ENCODE measurements at regions of chr10 and their contacts with region 1.

Region 1: DNA sequence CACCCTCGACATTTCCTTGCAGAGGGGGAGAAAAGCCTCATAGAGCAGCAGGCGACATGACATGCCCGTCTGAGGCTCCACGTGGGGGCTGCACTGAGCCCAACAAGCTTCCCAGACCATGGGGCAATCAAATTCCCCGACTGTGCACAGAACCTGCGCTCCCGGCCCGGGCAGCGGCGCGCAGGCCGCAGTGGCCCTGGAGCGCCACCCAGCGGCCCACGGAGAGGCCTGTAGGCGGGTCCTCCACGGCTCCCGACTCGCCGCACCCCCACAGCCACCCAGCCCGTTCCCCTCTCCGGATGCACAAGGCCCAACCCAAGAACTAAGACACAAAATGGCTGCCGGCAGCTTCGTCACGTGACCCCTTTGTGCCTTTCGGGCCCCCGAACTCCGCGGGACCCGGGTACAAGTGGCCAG is 816 bp downstream of the EPC1 start:
- DNase-seq: peak; percentile 93 to 98 (median 97)
- H3K4me3 ChIP-seq: peak overlapping the region; percentile 99
- H3K4me3 Mint-ChIP-seq: peak overlapping the region; percentile 95 to 98 (median 97)
- H3K27ac ChIP-seq: peak overlapping the region; percentile 100
- H3K27ac Mint-ChIP-seq: peak overlapping the region; percentile 99 to 100 (median 100)
- H3K4me1 ChIP-seq: peaks cover 62% of the 10 kb centered on the region
- H3K4me1 Mint-ChIP-seq: peaks cover 67 to 79% (median 77%) of the 10 kb centered on the region in 3 donors
- H3K27me3 ChIP-seq: no peaks in the 10 kb centered on the region
- H3K27me3 Mint-ChIP-seq: peaks cover 0 to 4% of the 10 kb centered on the region in 2 donors

Region 2: DNA sequence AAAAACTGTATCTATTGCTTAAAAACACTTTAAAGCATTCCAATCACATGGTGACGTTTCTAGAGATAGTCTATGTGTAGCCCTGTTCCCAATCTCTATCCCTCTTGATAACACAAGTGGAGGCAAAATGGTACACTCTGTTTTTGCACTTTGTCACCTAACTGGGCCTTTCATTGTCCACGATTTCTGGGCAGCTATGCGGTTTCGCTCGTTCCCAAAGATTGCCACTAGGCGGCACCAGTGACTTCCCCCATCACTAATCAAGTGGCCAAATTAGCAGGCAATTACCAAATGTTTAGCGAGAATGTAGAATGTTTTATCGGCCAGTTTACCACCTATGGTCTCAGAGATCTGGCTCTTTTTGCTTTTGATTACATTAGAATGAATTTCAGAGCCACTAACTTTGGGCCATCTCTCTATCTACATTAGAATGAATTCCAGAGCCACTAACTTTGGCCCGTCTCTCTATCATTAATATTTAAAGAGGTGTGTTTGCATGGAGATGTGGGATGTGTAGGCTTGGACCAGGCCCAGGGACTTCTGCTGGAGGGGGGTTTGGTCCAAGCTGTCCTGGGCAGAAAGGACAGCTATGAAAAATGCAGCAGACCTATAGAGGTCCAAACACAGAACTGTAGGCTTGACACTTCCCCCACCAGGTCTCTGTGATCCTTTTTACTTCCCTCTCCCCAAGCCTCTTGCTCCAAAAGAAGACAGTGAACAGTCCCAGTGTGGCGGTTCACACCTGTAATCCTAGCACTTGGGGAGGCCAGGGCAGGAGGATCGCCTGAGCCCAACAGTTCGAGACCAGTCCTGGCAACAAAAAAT is 89.3 kb before region 1 on chr10:
- CTCF ChIA-PET with region 1: interaction called, 15 read pairs
- POLR2A ChIA-PET with region 1: no interaction called
- DNase-seq: peak; percentile 41 to 77 (median 55)
- H3K4me3 ChIP-seq: no peak overlapping the region
- H3K4me3 Mint-ChIP-seq: peak overlapping the region in 1 of 7 donors; percentile 10
- H3K27ac ChIP-seq: no peak overlapping the region
- H3K27ac Mint-ChIP-seq: no peak overlapping the region
- H3K4me1 ChIP-seq: peaks cover 7% of the 10 kb centered on the region
- H3K4me1 Mint-ChIP-seq: peaks cover 7 to 8% (median 8%) of the 10 kb centered on the region in 3 donors
- H3K27me3 ChIP-seq: no peaks in the 10 kb centered on the region
- H3K27me3 Mint-ChIP-seq: no peaks in the 10 kb centered on the region

Region 3: GRCh38 chr10:32263300-32263699 is 82.8 kb before region 1 on chr10:
- CTCF ChIA-PET with region 1: interaction called, 15 read pairs
- POLR2A ChIA-PET with region 1: no interaction called
- DNase-seq: no peak
- H3K4me3 ChIP-seq: no peak overlapping the region
- H3K4me3 Mint-ChIP-seq: no peak overlapping the region
- H3K27ac ChIP-seq: no peak overlapping the region
- H3K27ac Mint-ChIP-seq: peak overlapping the region in 2 of 8 donors; percentile 13 to 31
- H3K4me1 ChIP-seq: no peaks in the 10 kb centered on the region
- H3K4me1 Mint-ChIP-seq: peaks cover 0 to 5% (median 2%) of the 10 kb centered on the region in 3 donors
- H3K27me3 ChIP-seq: no peaks in the 10 kb centered on the region
- H3K27me3 Mint-ChIP-seq: no peaks in the 10 kb centered on the region

Region 4: DNA sequence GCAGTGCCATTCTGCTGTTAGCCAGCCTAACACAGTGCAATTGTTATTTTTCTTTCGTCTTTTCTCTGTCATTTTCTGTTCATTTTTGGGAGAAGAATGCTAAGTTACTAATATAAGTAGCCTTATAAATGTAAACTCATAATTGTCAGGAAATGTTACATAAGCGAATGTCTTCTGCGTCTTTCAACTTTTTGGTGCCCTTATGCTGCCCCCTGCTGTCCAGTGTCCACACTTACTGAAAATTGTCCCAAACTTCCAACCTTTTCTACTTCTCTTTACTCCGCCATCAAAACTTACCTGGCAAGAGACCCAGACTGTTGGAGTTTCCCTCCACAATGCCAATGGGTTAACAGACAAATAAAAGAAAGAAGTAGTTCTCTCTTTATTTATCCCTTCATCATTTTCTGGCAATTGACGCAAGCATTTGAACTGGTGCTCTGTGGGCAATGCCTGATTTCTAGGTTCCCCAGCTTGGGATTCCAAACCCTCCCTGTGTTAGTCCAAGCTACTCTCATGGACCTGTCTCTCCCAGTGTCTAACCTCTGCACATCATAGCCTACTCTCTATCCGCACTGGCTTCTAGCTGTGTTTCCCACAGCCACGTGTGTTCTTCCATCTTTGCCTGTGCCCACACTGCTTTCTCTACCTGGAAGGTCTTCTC is 21.8 kb after region 1 on chr10:
- CTCF ChIA-PET with region 1: interaction called, 13 read pairs
- POLR2A ChIA-PET with region 1: interaction called, 3 read pairs
- DNase-seq: peak; percentile 65 to 81 (median 68)
- H3K4me3 ChIP-seq: no peak overlapping the region
- H3K4me3 Mint-ChIP-seq: peak overlapping the region; percentile 7 to 81 (median 46)
- H3K27ac ChIP-seq: no peak overlapping the region
- H3K27ac Mint-ChIP-seq: peak overlapping the region; percentile 23 to 89 (median 53)
- H3K4me1 ChIP-seq: peaks cover 27% of the 10 kb centered on the region
- H3K4me1 Mint-ChIP-seq: peaks cover 46 to 77% (median 58%) of the 10 kb centered on the region in 3 donors
- H3K27me3 ChIP-seq: no peaks in the 10 kb centered on the region
- H3K27me3 Mint-ChIP-seq: no peaks in the 10 kb centered on the region

Region 5: DNA sequence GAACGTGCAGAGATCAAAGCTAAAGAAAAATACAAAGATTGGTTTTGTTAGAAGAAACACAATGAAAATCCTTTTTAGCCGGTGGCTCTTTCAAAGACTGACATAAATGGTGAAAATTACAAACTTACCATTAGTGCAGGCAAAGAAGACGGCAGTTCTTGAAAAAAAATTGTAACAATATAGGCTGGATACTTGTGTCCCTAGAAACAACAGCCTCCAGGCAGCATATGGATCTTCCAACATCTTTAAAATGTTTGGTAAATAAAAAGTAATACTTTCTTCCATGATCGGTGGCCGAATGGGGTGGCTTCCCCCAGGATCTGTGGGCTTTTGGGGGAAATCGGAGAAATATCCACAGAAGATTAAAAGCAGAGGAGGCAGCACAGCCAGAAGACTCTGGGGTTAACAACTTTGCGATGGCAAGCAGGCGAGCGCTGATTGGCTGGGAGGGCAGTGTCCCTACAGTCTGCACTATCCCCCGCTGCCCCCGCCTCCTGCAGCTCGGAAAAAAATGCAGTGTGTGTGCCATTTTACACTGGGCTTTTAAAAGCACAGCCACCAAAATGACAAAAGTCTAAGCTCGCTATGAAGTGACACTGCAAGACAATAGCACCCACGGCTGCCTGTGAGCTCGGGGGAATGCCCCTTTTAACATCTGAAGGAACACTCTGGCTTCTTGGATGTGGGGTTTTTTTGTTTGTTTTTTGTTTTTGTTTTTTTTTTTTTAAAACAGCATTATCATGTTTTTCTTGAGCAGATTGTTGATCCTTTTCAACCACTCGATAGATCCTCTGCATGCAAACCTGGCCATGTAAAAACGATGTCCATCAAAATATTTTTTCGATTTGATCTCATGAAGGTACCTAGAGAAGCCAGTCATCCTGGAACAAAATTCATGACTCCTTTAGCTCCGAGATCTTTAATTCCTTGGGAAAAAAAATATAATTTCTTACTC is 32.5 kb after region 1 on chr10:
- CTCF ChIA-PET with region 1: interaction called, 13 read pairs
- POLR2A ChIA-PET with region 1: interaction called, 18 read pairs
- DNase-seq: peak; percentile 88 to 95 (median 88)
- H3K4me3 ChIP-seq: peak overlapping the region; percentile 92
- H3K4me3 Mint-ChIP-seq: no peak overlapping the region
- H3K27ac ChIP-seq: peak overlapping the region; percentile 89
- H3K27ac Mint-ChIP-seq: no peak overlapping the region
- H3K4me1 ChIP-seq: peaks cover 20% of the 10 kb centered on the region
- H3K4me1 Mint-ChIP-seq: peaks cover 21 to 26% (median 23%) of the 10 kb centered on the region in 3 donors
- H3K27me3 ChIP-seq: no peaks in the 10 kb centered on the region
- H3K27me3 Mint-ChIP-seq: no peaks in the 10 kb centered on the region

Region 6: GRCh38 chr10:32445740-32446535 is 99.8 kb after region 1 on chr10 and contains the start of gene CCDC7:
- CTCF ChIA-PET with region 1: interaction called, 10 read pairs
- POLR2A ChIA-PET with region 1: interaction called, 5 read pairs
- DNase-seq: peak; percentile 77 to 89 (median 87)
- H3K4me3 ChIP-seq: peak within 1 kb of the TSS; percentile 97
- H3K4me3 Mint-ChIP-seq: peak within 1 kb of the TSS; percentile 94 to 98 (median 97)
- H3K27ac ChIP-seq: peak within 1 kb of the TSS; percentile 97
- H3K27ac Mint-ChIP-seq: peak within 1 kb of the TSS; percentile 96 to 100 (median 100)
- H3K4me1 ChIP-seq: peaks cover 5% of the 10 kb centered on the region
- H3K4me1 Mint-ChIP-seq: peaks cover 11 to 34% (median 24%) of the 10 kb centered on the region in 3 donors
- H3K27me3 ChIP-seq: no peaks in the 10 kb centered on the region
- H3K27me3 Mint-ChIP-seq: no peaks in the 10 kb centered on the region
- total RNA-seq, gene CCDC7: 11.6 to 12.1 TPM

Measured in CD8-positive, alpha-beta memory T cell (primary cell).